CD4-positive, alpha-beta T cell (primary cell): ENCODE measurements at regions of chr6 and their contacts with region 1.

Region 1: GRCh38 chr6:26045065-26045927 is 41.9 kb upstream of the HFE start:
- DNase-seq: peak; percentile 49 to 96 (median 74)
- ATAC-seq: peak; percentile 55
- H3K4me3 ChIP-seq: peak overlapping the region; percentile 70
- H3K4me3 Mint-ChIP-seq: peak overlapping the region; percentile 97
- H3K27ac ChIP-seq: peak overlapping the region; percentile 71 to 91
- H3K27ac Mint-ChIP-seq: peak overlapping the region; percentile 94
- H3K4me1 ChIP-seq: peaks cover 21% of the 10 kb centered on the region
- H3K4me1 Mint-ChIP-seq: peaks cover 28% of the 10 kb centered on the region
- H3K27me3 ChIP-seq: no peaks in the 10 kb centered on the region
- H3K27me3 Mint-ChIP-seq: no peaks in the 10 kb centered on the region
- CTCF ChIP-seq: no peak

Region 2: DNA sequence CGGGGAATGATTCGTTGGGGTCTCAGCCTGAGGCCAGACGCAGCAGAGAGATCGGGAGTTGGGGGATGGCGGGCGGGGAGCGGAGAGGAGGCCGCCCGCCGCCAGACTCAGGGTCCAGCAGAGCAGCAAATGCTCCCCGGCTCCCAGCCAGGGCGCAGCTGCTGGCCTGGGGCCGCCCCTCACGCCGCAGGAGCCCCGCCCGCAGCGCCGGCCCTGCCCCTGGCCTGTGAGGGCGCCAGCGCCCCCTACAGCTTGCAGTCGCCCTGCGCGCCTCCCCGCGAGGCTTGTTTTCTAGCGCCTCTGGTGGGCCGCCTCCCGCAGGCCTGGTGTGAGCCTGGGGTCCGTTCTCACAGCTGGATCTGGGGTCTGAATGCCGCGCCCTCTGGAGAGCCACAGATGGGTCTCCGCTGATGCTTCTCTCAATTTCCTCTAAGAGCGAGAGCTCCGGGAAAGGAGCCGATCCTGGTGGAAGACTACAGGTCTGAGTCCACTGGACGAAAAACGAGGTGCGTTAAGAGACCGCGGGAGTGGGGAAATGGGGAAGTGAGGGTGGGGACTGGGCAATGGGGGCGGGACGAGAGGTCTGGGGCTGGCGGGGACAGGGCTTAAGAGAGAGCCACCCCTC is 52.8 kb before region 1 on chr6:
- CTCF ChIA-PET with region 1: interaction called, 9 read pairs
- POLR2A ChIA-PET with region 1: interaction called, 27 read pairs
- intact Hi-C with region 1: no loop called
- DNase-seq: peak; percentile 84 to 96 (median 93)
- ATAC-seq: peak; percentile 95
- H3K4me3 ChIP-seq: peak overlapping the region; percentile 55
- H3K4me3 Mint-ChIP-seq: peak overlapping the region; percentile 97
- H3K27ac ChIP-seq: peak overlapping the region; percentile 31 to 69
- H3K27ac Mint-ChIP-seq: peak overlapping the region; percentile 97
- H3K4me1 ChIP-seq: peaks cover 15% of the 10 kb centered on the region
- H3K4me1 Mint-ChIP-seq: peaks cover 37% of the 10 kb centered on the region
- H3K27me3 ChIP-seq: no peaks in the 10 kb centered on the region
- H3K27me3 Mint-ChIP-seq: no peaks in the 10 kb centered on the region
- CTCF ChIP-seq: peak; percentile 100

Region 3: GRCh38 chr6:26065952-26066380 is 20.7 kb after region 1 on chr6:
- CTCF ChIA-PET with region 1: interaction called, 6 read pairs
- POLR2A ChIA-PET with region 1: interaction called, 19 read pairs
- intact Hi-C with region 1: no loop called
- DNase-seq: peak in 11 of 14 experiments; percentile 14 to 87 (median 39)
- ATAC-seq: peak; percentile 93
- H3K4me3 ChIP-seq: no peak overlapping the region
- H3K4me3 Mint-ChIP-seq: no peak overlapping the region
- H3K27ac ChIP-seq: no peak overlapping the region
- H3K27ac Mint-ChIP-seq: no peak overlapping the region
- H3K4me1 ChIP-seq: peaks cover 3% of the 10 kb centered on the region
- H3K4me1 Mint-ChIP-seq: peaks cover 11% of the 10 kb centered on the region
- H3K27me3 ChIP-seq: no peaks in the 10 kb centered on the region
- H3K27me3 Mint-ChIP-seq: no peaks in the 10 kb centered on the region
- CTCF ChIP-seq: peak; percentile 85

Region 4: GRCh38 chr6:26175428-26176181 is 130.3 kb after region 1 on chr6:
- CTCF ChIA-PET with region 1: no interaction called
- POLR2A ChIA-PET with region 1: interaction called, 26 read pairs
- intact Hi-C with region 1: no loop called
- DNase-seq: peak in 11 of 14 experiments; percentile 13 to 85 (median 54)
- ATAC-seq: no peak
- H3K4me3 ChIP-seq: no peak overlapping the region
- H3K4me3 Mint-ChIP-seq: peak overlapping the region; percentile 83
- H3K27ac ChIP-seq: peak overlapping the region in 1 of 2 donors; percentile 41
- H3K27ac Mint-ChIP-seq: peak overlapping the region; percentile 93
- H3K4me1 ChIP-seq: peaks cover 17% of the 10 kb centered on the region
- H3K4me1 Mint-ChIP-seq: peaks cover 53% of the 10 kb centered on the region
- H3K27me3 ChIP-seq: no peaks in the 10 kb centered on the region
- H3K27me3 Mint-ChIP-seq: no peaks in the 10 kb centered on the region
- CTCF ChIP-seq: peak; percentile 87

Region 5: DNA sequence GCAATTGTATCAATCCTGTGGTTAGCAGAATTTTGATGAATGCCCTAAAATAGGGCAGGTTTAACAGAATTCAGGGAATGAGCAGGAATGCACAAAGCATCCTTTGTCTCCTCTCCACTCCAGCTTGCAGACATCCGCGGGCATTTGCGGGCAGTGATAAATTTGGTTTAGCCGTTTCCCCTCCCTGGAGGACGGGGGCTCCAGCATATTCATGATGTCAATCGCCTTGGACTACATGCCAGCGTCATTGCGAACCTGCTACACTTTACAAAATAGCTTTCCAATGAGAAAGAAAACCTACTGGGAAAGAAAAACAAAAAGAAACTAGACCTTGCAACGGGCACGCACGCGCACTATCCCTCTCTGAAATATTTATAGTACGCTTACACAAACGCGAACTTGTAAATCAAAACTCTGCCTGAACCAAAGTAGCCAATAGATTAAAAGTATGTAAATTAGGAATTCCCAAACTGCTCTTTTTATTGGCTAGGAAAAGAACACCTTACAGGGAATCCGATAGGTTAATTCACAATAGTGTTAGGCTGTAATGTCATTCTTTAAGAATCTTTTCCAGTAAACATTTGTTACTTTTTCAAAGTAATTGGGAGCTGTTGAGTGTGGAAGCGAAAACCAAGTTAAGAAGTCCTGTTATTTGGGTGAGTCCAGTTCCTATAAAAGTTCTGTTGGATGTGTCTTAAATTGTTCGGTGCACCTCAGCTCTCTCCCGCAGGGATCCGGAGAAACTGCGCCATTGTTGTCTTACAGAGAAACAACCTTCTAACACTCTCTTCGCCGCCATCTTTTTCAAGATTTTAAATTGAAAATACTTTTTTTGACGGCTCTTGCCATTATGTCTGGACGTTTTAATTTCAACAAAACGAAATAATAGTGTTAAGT is 178.6 kb after region 1 on chr6:
- CTCF ChIA-PET with region 1: no interaction called
- POLR2A ChIA-PET with region 1: interaction called, 17 read pairs
- intact Hi-C with region 1: no loop called
- DNase-seq: peak in 13 of 14 experiments; percentile 45 to 93 (median 60)
- ATAC-seq: peak; percentile 87
- H3K4me3 ChIP-seq: peak overlapping the region; percentile 68
- H3K4me3 Mint-ChIP-seq: no peak overlapping the region
- H3K27ac ChIP-seq: peak overlapping the region; percentile 72 to 82
- H3K27ac Mint-ChIP-seq: no peak overlapping the region
- H3K4me1 ChIP-seq: peaks cover 18% of the 10 kb centered on the region
- H3K4me1 Mint-ChIP-seq: peaks cover 5% of the 10 kb centered on the region
- H3K27me3 ChIP-seq: no peaks in the 10 kb centered on the region
- H3K27me3 Mint-ChIP-seq: no peaks in the 10 kb centered on the region
- CTCF ChIP-seq: no peak

Region 6: DNA sequence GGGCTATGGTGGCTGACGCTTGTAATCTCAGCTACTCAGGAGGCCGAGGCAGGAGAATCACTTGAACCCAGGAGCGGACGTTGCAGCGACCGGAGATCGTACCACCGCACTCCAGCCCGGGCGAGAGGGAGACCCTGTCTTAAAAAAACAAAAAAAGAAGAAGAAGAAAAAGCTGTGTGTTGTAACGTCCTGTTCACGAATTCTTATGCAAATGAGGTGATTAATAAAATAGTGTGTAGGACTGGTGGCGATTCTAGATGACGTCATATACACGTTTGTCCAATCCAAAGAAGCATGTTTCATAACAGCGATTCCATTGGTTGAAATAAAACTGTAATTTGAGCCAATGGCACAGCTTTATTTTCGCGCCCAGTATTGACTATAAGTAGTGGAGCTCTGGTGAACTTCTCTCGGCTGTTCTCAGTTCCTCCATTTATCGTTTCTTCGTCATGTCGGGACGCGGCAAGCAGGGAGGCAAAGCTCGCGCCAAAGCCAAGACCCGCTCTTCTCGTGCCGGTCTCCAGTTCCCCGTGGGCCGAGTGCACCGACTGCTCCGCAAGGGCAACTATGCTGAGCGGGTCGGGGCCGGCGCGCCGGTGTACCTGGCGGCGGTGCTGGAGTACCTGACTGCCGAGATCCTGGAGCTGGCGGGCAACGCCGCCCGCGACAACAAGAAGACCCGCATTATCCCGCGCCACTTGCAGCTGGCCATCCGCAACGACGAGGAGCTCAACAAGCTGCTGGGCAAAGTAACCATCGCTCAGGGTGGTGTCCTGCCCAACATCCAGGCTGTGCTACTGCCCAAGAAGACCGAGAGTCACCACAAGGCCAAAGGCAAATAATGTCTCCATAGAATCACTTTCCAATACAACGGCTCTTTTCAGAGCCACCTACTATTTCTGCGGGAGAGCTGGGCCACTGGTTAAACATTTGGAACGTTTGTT is 1819.9 kb after region 1 on chr6:
- CTCF ChIA-PET with region 1: no interaction called
- POLR2A ChIA-PET with region 1: interaction called, 13 read pairs
- intact Hi-C with region 1: no loop called
- DNase-seq: peak in 13 of 14 experiments; percentile 35 to 97 (median 61)
- ATAC-seq: peak; percentile 83
- H3K4me3 ChIP-seq: peak overlapping the region; percentile 59
- H3K4me3 Mint-ChIP-seq: peak overlapping the region; percentile 100
- H3K27ac ChIP-seq: peak overlapping the region; percentile 54 to 78
- H3K27ac Mint-ChIP-seq: peak overlapping the region; percentile 93
- H3K4me1 ChIP-seq: peaks cover 38% of the 10 kb centered on the region
- H3K4me1 Mint-ChIP-seq: peaks cover 41% of the 10 kb centered on the region
- H3K27me3 ChIP-seq: no peaks in the 10 kb centered on the region
- H3K27me3 Mint-ChIP-seq: peaks cover 3% of the 10 kb centered on the region
- CTCF ChIP-seq: no peak